ENCODE measurements at regions of chrX and their contacts with region 1.

Region 1: GRCh38 chrX:123475068-123475724 is 257.7 kb downstream of the THOC2 start:
- DNase-seq: no peak
- H3K4me3 ChIP-seq: no peak overlapping the region
- H3K27ac ChIP-seq: no peak overlapping the region
- H3K4me1 ChIP-seq: no peaks in the 10 kb centered on the region
- H3K27me3 ChIP-seq: no peaks in the 10 kb centered on the region
- CTCF ChIP-seq: no peak
- POLR2A ChIP-seq: no peak

Region 2: GRCh38 chrX:123167621-123168020 is 307.6 kb before region 1 on chrX:
- intact Hi-C with region 1: no loop called
- DNase-seq: no peak
- H3K4me3 ChIP-seq: no peak overlapping the region
- H3K27ac ChIP-seq: no peak overlapping the region
- H3K4me1 ChIP-seq: no peaks in the 10 kb centered on the region
- H3K27me3 ChIP-seq: no peaks in the 10 kb centered on the region
- CTCF ChIP-seq: no peak
- POLR2A ChIP-seq: no peak

Region 3: DNA sequence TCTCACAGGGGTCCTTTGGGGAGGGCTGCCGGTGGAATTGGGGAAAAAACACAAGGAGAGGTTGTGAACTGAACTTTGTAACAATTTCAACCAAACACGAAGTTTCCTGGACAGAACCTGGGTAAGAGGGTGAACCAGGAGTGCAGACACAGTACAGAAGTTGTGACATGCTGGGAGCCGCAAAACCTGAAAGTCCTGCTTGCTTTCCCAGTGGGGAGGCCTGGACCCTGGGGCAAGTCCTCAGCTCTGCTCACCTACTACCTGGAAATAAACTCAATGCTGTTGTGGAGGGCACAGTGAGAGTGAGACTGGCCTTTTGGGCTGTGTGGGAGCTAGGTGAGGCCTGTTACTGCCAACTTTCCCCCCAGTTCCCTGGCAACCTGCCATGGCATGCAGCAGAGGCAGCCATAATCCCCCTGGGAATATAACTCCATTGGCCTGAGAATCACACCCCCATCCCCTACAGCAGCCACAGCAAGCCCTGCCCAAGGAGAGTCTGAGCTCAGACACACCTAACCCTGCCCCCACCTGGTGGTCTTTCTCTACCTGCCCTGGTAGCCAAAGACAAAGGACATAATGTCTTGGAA is 94.9 kb after region 1 on chrX:
- intact Hi-C with region 1: no loop called
- DNase-seq: no peak
- H3K4me3 ChIP-seq: no peak overlapping the region
- H3K27ac ChIP-seq: no peak overlapping the region
- H3K4me1 ChIP-seq: no peaks in the 10 kb centered on the region
- H3K27me3 ChIP-seq: no peaks in the 10 kb centered on the region
- CTCF ChIP-seq: no peak
- POLR2A ChIP-seq: no peak

Region 4: GRCh38 chrX:123764967-123765871 is 290.0 kb after region 1 on chrX:
- intact Hi-C with region 1: loop called (anchors 10 kb)
- DNase-seq: peak; percentile 83
- H3K4me3 ChIP-seq: peak overlapping the region in 1 of 2 donors; percentile 4
- H3K27ac ChIP-seq: peak overlapping the region; percentile 66 to 72
- H3K4me1 ChIP-seq: no peaks in the 10 kb centered on the region
- H3K27me3 ChIP-seq: no peaks in the 10 kb centered on the region
- CTCF ChIP-seq: no peak
- POLR2A ChIP-seq: no peak